ENCODE measurements at regions of chr11 and their contacts with region 1.

Region 1: GRCh38 chr11:10282117-10282516 is 11.9 kb downstream of the SBF2 start:
- DNase-seq: no peak
- ATAC-seq: no peak
- H3K4me3 ChIP-seq: no peak overlapping the region
- H3K27ac ChIP-seq: no peak overlapping the region
- H3K4me1 ChIP-seq: no peaks in the 10 kb centered on the region
- H3K27me3 ChIP-seq: peaks cover 1 to 3% of the 10 kb centered on the region in 2 experiments; a peak in 1 of 4 replicates
- CTCF ChIP-seq: no peak
- EP300 ChIP-seq: no peak
- POLR2A ChIP-seq: no peak
- RAD21 ChIP-seq: no peak

Region 2: DNA sequence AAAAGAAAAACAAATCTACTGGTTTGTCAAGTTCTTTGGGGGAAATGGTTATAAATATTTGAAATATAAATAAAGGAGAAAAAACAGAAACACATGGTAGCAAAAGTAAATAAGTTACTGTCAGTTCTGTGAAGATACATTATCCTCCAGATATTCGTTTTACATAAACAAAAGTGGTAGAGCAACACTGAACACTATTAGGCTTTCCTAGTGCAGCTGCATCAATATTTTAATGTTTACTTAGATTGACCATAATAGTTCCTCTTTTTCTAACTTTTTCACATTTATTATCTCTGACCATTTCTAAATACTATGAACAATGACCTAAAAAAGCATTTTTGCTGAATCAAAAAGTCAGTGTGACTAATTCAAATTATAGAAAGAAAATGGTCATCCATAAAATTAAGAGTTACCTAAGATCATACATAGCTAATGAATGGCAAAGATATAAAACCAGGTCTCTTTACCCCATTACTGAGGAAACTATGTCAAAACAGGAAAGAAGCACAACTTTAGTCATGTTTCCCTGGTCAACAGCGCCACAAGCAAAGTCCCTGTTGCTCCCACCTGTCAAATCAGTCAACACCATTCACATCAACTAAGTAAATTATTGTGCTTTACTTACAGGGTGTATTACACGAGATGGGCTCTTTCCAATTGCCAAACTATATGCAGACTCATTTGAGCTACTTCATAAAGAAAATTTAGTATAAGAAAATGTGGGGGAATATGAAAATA is 26.6 kb before region 1 on chr11:
- CTCF ChIA-PET with region 1: no interaction called
- POLR2A ChIA-PET with region 1: no interaction called
- RAD21 ChIA-PET with region 1: no interaction called
- SMC1A ChIA-PET with region 1: no interaction called
- in situ Hi-C with region 1: no loop called
- intact Hi-C with region 1: no loop called
- DNase-seq: no peak
- ATAC-seq: no peak
- H3K4me3 ChIP-seq: no peak overlapping the region
- H3K27ac ChIP-seq: no peak overlapping the region
- H3K4me1 ChIP-seq: no peaks in the 10 kb centered on the region
- H3K27me3 ChIP-seq: no peaks in the 10 kb centered on the region
- CTCF ChIP-seq: no peak
- EP300 ChIP-seq: no peak
- POLR2A ChIP-seq: no peak
- RAD21 ChIP-seq: no peak

Region 3: DNA sequence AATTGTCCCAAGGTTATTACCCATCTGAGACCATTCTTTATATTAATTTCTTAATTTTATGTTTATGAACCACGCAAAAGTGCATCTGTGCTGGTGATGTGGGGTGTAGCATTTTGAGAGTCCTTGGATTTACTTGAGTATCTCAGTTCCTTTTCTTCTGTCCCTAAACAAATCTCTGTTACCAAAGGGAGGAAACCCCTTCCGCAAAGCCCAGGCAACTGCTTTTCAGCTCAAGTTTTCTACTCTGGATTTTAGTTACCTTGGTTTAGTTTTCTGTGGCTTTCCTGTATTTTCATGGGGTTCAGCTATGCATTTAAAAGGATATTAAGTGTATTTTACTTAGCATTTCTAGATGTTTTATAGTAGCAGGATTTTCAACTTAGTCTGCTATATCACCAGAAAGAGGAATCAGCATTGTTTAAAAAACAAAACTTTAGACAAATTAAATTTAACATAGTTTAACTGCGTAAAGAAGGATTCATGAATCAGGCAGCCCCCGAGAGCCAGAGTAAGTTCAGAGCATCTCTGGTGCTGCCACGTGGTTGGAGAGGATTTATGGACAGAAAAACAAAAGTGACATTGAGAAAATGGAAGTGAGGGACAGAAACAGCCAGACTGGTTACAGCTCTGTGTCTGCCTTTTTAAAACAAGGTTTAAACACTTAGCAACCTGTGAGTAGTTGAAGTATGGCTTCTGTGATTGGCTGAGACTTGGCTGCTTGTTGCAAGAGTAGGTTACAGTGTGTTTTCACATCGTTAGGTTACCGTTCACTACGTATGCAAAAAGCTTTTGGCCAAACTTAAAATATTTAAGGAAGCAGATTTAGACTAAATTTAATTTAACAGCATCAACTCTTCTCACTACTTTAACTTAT is 32.3 kb after region 1 on chr11:
- CTCF ChIA-PET with region 1: no interaction called
- POLR2A ChIA-PET with region 1: no interaction called
- RAD21 ChIA-PET with region 1: no interaction called
- SMC1A ChIA-PET with region 1: no interaction called
- in situ Hi-C with region 1: no loop called
- intact Hi-C with region 1: no loop called
- DNase-seq: peak; percentile 66
- ATAC-seq: peak; percentile 77
- H3K4me3 ChIP-seq: no peak overlapping the region
- H3K27ac ChIP-seq: no peak overlapping the region
- H3K4me1 ChIP-seq: peaks cover 31% of the 10 kb centered on the region
- H3K27me3 ChIP-seq: no peaks in the 10 kb centered on the region
- CTCF ChIP-seq: no peak
- EP300 ChIP-seq: no peak
- POLR2A ChIP-seq: no peak
- RAD21 ChIP-seq: no peak

Region 4: GRCh38 chr11:10693509-10694081 is 411.5 kb after region 1 on chr11 and contains the start of gene IRAG1:
- CTCF ChIA-PET with region 1: no interaction called
- POLR2A ChIA-PET with region 1: no interaction called
- RAD21 ChIA-PET with region 1: no interaction called
- SMC1A ChIA-PET with region 1: no interaction called
- in situ Hi-C with region 1: no loop called
- intact Hi-C with region 1: loop called (anchors 5 kb)
- DNase-seq: no peak
- ATAC-seq: no peak
- H3K4me3 ChIP-seq: no peak within 1 kb of the TSS
- H3K27ac ChIP-seq: no peak within 1 kb of the TSS
- H3K4me1 ChIP-seq: no peaks in the 10 kb centered on the region
- H3K27me3 ChIP-seq: peaks cover 0 to 6% of the 10 kb centered on the region in 2 experiments; a peak in 3 of 4 replicates
- CTCF ChIP-seq: no peak
- EP300 ChIP-seq: no peak
- POLR2A ChIP-seq: no peak
- RAD21 ChIP-seq: no peak
- polyA plus RNA-seq, gene IRAG1: 0.02 TPM in 1 of 2 experiments, not detected in the other